Activated CD4-positive, alpha-beta memory T cell treated with anti-CD3 and anti-CD28 coated beads for 36 hours (primary cell): ENCODE measurements at regions of chr11 and their contacts with region 1.

Region 1: GRCh38 chr11:19071255-19071654 is 10.7 kb upstream of the MRGPRX2 start:
- DNase-seq: peak; percentile 69
- H3K4me3 Mint-ChIP-seq: peak overlapping the region; percentile 19
- H3K27ac Mint-ChIP-seq: no peak overlapping the region
- H3K4me1 Mint-ChIP-seq: peaks cover 4% of the 10 kb centered on the region
- H3K27me3 Mint-ChIP-seq: peaks cover 3% of the 10 kb centered on the region

Region 2: GRCh38 chr11:18958221-18958910 is 112.9 kb before region 1 on chr11:
- CTCF ChIA-PET with region 1: no interaction called
- POLR2A ChIA-PET with region 1: no interaction called
- intact Hi-C with region 1: no loop called
- DNase-seq: no peak
- H3K4me3 Mint-ChIP-seq: no peak overlapping the region
- H3K27ac Mint-ChIP-seq: no peak overlapping the region
- H3K4me1 Mint-ChIP-seq: no peaks in the 10 kb centered on the region
- H3K27me3 Mint-ChIP-seq: peaks cover 6% of the 10 kb centered on the region

Region 3: GRCh38 chr11:19116971-19117750 is 45.9 kb after region 1 on chr11 and contains the start of gene ZDHHC13:
- CTCF ChIA-PET with region 1: interaction called, 19 read pairs
- POLR2A ChIA-PET with region 1: no interaction called
- intact Hi-C with region 1: loop called (anchors 2 kb)
- DNase-seq: peak; percentile 98
- H3K4me3 Mint-ChIP-seq: peak within 1 kb of the TSS; percentile 89
- H3K27ac Mint-ChIP-seq: peak within 1 kb of the TSS; percentile 67
- H3K4me1 Mint-ChIP-seq: peaks cover 45% of the 10 kb centered on the region
- H3K27me3 Mint-ChIP-seq: no peaks in the 10 kb centered on the region
- total RNA-seq, gene ZDHHC13: 25.4 to 26.8 TPM

Region 4: GRCh38 chr11:19240420-19241259 is 169.4 kb after region 1 on chr11 and contains the start of gene E2F8:
- CTCF ChIA-PET with region 1: interaction called, 6 read pairs
- POLR2A ChIA-PET with region 1: no interaction called
- intact Hi-C with region 1: loop called (anchors 2 kb)
- DNase-seq: peak; percentile 95
- H3K4me3 Mint-ChIP-seq: peak within 1 kb of the TSS; percentile 88
- H3K27ac Mint-ChIP-seq: peak within 1 kb of the TSS; percentile 74
- H3K4me1 Mint-ChIP-seq: peaks cover 20% of the 10 kb centered on the region
- H3K27me3 Mint-ChIP-seq: peaks cover 31% of the 10 kb centered on the region
- total RNA-seq, gene E2F8: 16.0 to 16.5 TPM

Region 5: DNA sequence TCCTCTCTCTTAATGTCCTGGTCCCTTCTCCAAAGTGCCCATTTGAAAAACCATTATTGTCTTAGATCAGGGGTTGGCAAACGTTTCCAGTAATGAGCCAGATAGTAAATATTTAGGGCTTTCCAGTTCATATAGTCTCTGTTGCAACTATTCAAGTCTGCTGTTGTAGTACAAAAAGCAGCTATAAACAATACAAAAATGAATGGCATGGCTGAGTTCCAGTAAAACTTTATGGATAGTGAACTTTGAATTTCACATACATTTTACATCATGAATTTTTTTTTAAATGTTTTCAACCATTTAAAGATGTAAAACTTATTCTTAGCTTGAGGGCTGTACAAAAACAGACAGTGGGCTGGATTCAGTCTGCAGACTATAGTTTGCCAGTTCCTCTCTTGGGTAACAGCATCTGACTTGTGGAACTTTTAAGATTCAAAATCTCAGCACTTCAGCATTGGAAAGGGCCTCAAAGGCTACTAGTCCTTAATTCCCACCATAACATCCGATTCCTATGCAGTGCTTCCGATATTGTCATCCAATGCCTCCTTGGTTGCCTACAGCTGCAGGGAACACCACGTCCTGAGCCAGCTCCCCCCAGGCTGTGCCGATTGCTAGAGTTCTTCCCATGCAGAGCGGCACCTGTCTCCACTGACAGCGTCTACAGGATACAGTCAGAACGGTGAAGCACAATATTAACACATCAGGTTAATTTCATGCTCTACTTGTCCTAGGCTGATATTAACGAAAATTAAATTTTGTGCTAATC is 235.1 kb after region 1 on chr11:
- CTCF ChIA-PET with region 1: no interaction called
- POLR2A ChIA-PET with region 1: no interaction called
- intact Hi-C with region 1: loop called (anchors 10 kb)
- DNase-seq: no peak
- H3K4me3 Mint-ChIP-seq: no peak overlapping the region
- H3K27ac Mint-ChIP-seq: no peak overlapping the region
- H3K4me1 Mint-ChIP-seq: no peaks in the 10 kb centered on the region
- H3K27me3 Mint-ChIP-seq: peaks cover 2% of the 10 kb centered on the region

Region 6: GRCh38 chr11:19903620-19904069 is 832.4 kb after region 1 on chr11:
- CTCF ChIA-PET with region 1: no interaction called
- POLR2A ChIA-PET with region 1: no interaction called
- intact Hi-C with region 1: loop called (anchors 5 kb)
- DNase-seq: peak; percentile 69
- H3K4me3 Mint-ChIP-seq: no peak overlapping the region
- H3K27ac Mint-ChIP-seq: no peak overlapping the region
- H3K4me1 Mint-ChIP-seq: no peaks in the 10 kb centered on the region
- H3K27me3 Mint-ChIP-seq: no peaks in the 10 kb centered on the region